ENCODE measurements at regions of chr18 and their contacts with region 1.

Region 1: GRCh38 chr18:12934454-12935071 is 13.2 kb upstream of the SEH1L start:
- H3K4me3 ChIP-seq: no peak overlapping the region
- H3K27ac ChIP-seq: no peak overlapping the region
- H3K4me1 ChIP-seq: no peaks in the 10 kb centered on the region
- CTCF ChIP-seq: peak; percentile 91

Region 2: GRCh38 chr18:12391618-12392165 is 542.9 kb before region 1 on chr18:
- CTCF ChIA-PET with region 1: interaction called, 18 read pairs
- POLR2A ChIA-PET with region 1: no interaction called
- H3K4me3 ChIP-seq: no peak overlapping the region
- H3K27ac ChIP-seq: no peak overlapping the region
- H3K4me1 ChIP-seq: no peaks in the 10 kb centered on the region
- CTCF ChIP-seq: peak; percentile 73

Region 3: GRCh38 chr18:12726774-12727550 is 207.6 kb before region 1 on chr18:
- CTCF ChIA-PET with region 1: interaction called, 224 read pairs
- POLR2A ChIA-PET with region 1: interaction called, 6 read pairs
- H3K4me3 ChIP-seq: no peak overlapping the region
- H3K27ac ChIP-seq: no peak overlapping the region
- H3K4me1 ChIP-seq: no peaks in the 10 kb centered on the region
- CTCF ChIP-seq: peak; percentile 73

Region 4: GRCh38 chr18:12751931-12752330 is 182.6 kb before region 1 on chr18:
- CTCF ChIA-PET with region 1: interaction called, 11 read pairs
- POLR2A ChIA-PET with region 1: no interaction called
- H3K4me3 ChIP-seq: no peak overlapping the region
- H3K27ac ChIP-seq: no peak overlapping the region
- H3K4me1 ChIP-seq: no peaks in the 10 kb centered on the region
- CTCF ChIP-seq: no peak

Region 5: GRCh38 chr18:12911025-12911928 is 23.3 kb before region 1 on chr18:
- CTCF ChIA-PET with region 1: interaction called, 11 read pairs
- POLR2A ChIA-PET with region 1: no interaction called
- H3K4me3 ChIP-seq: no peak overlapping the region
- H3K27ac ChIP-seq: no peak overlapping the region
- H3K4me1 ChIP-seq: peaks cover 9% of the 10 kb centered on the region; the same call in 1 of the 2 replicates
- CTCF ChIP-seq: no peak

Region 6: DNA sequence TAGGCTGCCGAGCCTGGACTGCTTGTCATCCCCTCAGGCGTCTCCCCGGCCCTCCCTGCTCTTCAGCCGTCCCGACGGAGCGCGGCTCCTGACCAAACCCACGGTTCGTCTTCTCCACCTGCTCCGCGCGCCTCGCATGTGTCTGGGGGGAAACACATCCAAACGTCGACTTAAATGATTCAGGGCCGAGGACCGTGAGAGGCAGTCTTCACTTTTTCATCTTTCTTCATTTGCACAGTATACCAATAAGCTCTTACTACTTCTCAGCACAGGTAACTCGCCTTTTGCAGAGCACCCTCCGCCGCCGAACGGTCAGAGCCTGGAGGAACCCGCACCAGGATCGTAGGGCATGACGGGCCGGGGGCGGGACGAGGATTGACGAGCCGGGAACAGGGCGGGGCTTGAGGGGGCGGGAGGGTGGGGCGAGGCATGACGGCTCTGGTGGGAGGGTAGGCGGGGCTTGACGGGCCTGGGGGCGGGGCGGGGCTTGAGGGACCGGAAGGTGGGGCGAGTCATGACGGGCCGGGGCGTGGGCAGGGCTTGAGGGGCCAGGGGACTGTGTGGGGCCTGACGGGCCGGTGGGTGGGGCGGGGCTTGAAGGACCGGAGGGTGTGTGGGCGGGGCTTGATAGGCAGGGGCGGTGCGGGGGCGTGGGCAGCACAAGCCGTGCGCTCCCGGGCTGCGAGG is 12.9 kb after region 1 on chr18 and contains the start of gene SEH1L:
- CTCF ChIA-PET with region 1: interaction called, 17 read pairs
- POLR2A ChIA-PET with region 1: interaction called, 6 read pairs
- H3K4me3 ChIP-seq: peak within 1 kb of the TSS; percentile 73
- H3K27ac ChIP-seq: peak within 1 kb of the TSS; percentile 90
- H3K4me1 ChIP-seq: peaks cover 5% of the 10 kb centered on the region
- CTCF ChIP-seq: no peak

Region 7: DNA sequence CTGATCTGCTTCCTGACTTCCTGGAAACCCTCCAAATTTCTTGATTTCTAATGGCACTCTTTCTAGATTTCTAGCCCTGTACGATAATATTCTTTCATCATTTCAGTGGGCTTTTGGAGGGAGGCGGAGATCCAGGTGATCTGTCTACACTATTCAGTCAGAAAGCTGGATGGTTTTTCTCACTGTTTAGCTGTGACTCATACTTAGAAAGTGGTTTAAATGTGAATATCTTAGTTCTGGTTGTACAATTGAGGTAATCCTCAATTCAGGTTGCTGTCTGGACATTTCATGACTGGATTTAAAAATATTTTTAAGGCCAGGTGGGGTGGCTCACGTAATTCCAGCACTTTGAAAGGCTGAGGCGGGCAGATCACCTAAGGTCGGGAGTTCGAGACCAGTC is 34.1 kb after region 1 on chr18:
- CTCF ChIA-PET with region 1: no interaction called
- POLR2A ChIA-PET with region 1: no interaction called
- H3K4me3 ChIP-seq: no peak overlapping the region
- H3K27ac ChIP-seq: no peak overlapping the region
- H3K4me1 ChIP-seq: no peaks in the 10 kb centered on the region
- CTCF ChIP-seq: no peak

Region 8: GRCh38 chr18:13302457-13303225 is 368.1 kb after region 1 on chr18:
- CTCF ChIA-PET with region 1: no interaction called
- POLR2A ChIA-PET with region 1: no interaction called
- H3K4me3 ChIP-seq: no peak overlapping the region
- H3K27ac ChIP-seq: no peak overlapping the region
- H3K4me1 ChIP-seq: peaks cover 14% of the 10 kb centered on the region
- CTCF ChIP-seq: no peak